ENCODE measurements at regions of chr10 and their contacts with region 1.

Region 1: GRCh38 chr10:100508691-100509150 is 10.9 kb downstream of the SEC31B start:
- DNase-seq: peak; percentile 80
- ATAC-seq: peak; percentile 58
- H3K4me3 Mint-ChIP-seq: peak overlapping the region; percentile 78
- H3K27ac Mint-ChIP-seq: peak overlapping the region; percentile 94
- H3K4me1 Mint-ChIP-seq: peaks cover 87% of the 10 kb centered on the region
- H3K27me3 Mint-ChIP-seq: no peaks in the 10 kb centered on the region

Region 2: GRCh38 chr10:100373298-100374136 is 135.2 kb before region 1 on chr10:
- CTCF ChIA-PET with region 1: interaction called, 20 read pairs
- POLR2A ChIA-PET with region 1: interaction called, 27 read pairs
- DNase-seq: peak; percentile 96
- ATAC-seq: peak; percentile 83
- H3K4me3 Mint-ChIP-seq: no peak overlapping the region
- H3K27ac Mint-ChIP-seq: no peak overlapping the region
- H3K4me1 Mint-ChIP-seq: peaks cover 50% of the 10 kb centered on the region
- H3K27me3 Mint-ChIP-seq: no peaks in the 10 kb centered on the region

Region 3: GRCh38 chr10:100438674-100439315 is 69.9 kb before region 1 on chr10:
- CTCF ChIA-PET with region 1: interaction called, 165 read pairs
- POLR2A ChIA-PET with region 1: interaction called, 13 read pairs
- DNase-seq: no peak
- ATAC-seq: no peak
- H3K4me3 Mint-ChIP-seq: no peak overlapping the region
- H3K27ac Mint-ChIP-seq: no peak overlapping the region
- H3K4me1 Mint-ChIP-seq: peaks cover 4% of the 10 kb centered on the region
- H3K27me3 Mint-ChIP-seq: no peaks in the 10 kb centered on the region

Region 4: DNA sequence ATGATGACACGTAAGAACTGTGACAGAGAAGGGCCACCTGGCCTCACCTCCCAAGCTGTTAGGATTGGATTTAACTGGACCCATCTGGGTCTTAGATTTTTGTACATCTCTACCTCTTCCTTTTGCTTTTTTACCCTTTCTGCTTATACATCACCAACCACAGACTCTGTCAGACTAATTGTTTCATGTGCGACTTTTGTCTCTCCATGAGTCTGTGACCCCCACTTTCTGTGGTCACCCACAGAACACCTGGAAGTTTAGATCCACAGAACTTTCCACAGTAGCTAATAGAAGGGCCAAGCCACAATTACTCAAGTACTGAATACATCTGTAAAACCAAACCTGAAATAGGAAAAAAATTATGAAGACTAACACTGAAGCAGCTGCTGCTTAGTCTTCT is 12.2 kb before region 1 on chr10:
- CTCF ChIA-PET with region 1: interaction called, 117 read pairs
- POLR2A ChIA-PET with region 1: interaction called, 15 read pairs
- DNase-seq: no peak
- ATAC-seq: no peak
- H3K4me3 Mint-ChIP-seq: no peak overlapping the region
- H3K27ac Mint-ChIP-seq: peak overlapping the region; percentile 40
- H3K4me1 Mint-ChIP-seq: peaks cover 58% of the 10 kb centered on the region
- H3K27me3 Mint-ChIP-seq: no peaks in the 10 kb centered on the region

Region 5: DNA sequence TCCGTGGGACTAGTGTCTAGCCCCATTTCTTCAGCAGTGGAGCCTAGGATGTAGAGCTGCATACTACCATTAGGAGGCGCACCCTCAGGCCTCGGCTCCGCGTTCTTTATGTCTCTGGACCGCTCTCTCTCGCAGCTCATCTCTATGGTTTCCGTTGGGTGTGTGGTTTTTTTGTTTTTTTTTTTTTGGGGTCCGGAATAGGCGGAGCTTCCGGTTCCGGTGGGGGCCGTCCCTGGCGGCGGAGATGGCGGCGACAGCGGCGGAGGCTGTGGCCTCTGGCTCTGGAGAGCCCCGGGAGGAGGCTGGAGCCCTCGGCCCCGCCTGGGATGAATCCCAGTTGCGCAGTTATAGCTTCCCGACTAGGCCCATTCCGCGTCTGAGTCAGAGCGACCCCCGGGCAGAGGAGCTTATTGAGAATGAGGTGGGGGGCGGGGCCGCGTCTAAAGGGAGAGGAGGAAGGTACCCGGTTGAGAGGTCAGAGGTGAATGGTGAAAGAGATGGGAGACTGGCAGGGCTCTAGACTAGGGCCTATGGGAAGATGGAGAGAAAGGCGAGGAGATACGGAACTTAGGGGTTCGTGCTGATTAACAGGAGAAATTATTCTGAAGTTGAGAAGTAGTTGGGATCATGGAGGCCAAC is 27.1 kb after region 1 on chr10 and contains the start of gene HIF1AN:
- CTCF ChIA-PET with region 1: interaction called, 55 read pairs
- POLR2A ChIA-PET with region 1: interaction called, 41 read pairs
- DNase-seq: peak; percentile 94
- ATAC-seq: peak; percentile 98
- H3K4me3 Mint-ChIP-seq: no peak within 1 kb of the TSS
- H3K27ac Mint-ChIP-seq: peak within 1 kb of the TSS; percentile 21
- H3K4me1 Mint-ChIP-seq: peaks cover 14% of the 10 kb centered on the region
- H3K27me3 Mint-ChIP-seq: no peaks in the 10 kb centered on the region
- total RNA-seq, gene HIF1AN: 46.5 to 48.1 TPM

Region 6: DNA sequence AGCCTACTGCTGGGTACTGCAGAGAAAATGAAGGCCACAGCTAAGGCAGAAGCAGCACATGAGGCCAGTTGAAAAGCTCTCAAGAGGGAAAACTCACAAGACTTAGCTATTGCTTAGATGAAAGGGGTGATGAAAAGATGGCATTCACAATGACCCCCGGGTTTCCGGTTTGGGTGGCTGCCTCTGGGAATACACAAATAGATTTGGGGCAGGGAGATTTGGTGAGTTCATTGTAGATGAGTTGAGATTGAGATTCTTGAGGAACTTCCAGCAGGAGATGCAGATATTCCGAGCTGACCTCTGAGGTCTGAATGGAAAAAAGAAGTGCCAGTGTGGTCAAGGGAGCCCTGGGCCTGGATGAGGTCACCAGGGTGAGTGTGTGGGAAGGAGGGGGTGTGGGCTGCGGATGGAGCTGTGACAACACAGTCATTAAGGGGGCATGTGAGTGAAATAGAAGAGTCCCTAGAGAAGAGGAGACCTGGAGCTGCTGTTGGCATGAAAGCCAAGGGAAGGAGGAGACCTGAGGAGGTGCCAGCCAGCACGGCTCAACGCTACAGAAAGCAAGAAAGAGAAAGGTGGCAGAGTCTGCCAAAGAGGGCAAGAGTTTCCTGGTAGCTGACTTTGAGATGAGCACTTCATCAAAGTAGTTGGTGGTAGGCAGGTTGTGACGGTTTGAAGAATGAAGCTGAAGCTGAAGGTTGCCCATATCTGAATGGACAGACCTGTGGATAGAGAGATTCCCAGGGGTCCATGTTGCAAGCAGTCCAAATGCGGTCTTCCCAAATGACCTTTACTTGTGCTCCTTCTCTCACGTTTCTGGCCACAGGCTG is 70.8 kb after region 1 on chr10:
- CTCF ChIA-PET with region 1: no interaction called
- POLR2A ChIA-PET with region 1: no interaction called
- DNase-seq: peak; percentile 13
- ATAC-seq: no peak
- H3K4me3 Mint-ChIP-seq: no peak overlapping the region
- H3K27ac Mint-ChIP-seq: no peak overlapping the region
- H3K4me1 Mint-ChIP-seq: no peaks in the 10 kb centered on the region
- H3K27me3 Mint-ChIP-seq: peaks cover 28% of the 10 kb centered on the region

Region 7: GRCh38 chr10:100670828-100671479 is 162.2 kb after region 1 on chr10:
- CTCF ChIA-PET with region 1: no interaction called
- POLR2A ChIA-PET with region 1: no interaction called
- DNase-seq: peak; percentile 68
- ATAC-seq: peak; percentile 94
- H3K4me3 Mint-ChIP-seq: no peak overlapping the region
- H3K27ac Mint-ChIP-seq: no peak overlapping the region
- H3K4me1 Mint-ChIP-seq: peaks cover 7% of the 10 kb centered on the region
- H3K27me3 Mint-ChIP-seq: peaks cover 55% of the 10 kb centered on the region

Measured in activated CD8-positive, alpha-beta T cell treated with anti-CD3 and anti-CD28 coated beads, Interleukin-2, amount 10 ng/mL, durations not matched to agents 7 days and 5 days (primary cell).